Activated T-helper 2 cell treated with anti-CD3 and anti-CD28 coated beads, Interferon-gamma antibody, Interleukin-2, Interleukin-4, amounts not matched to agents 10 μg/mL and 5 μg/mL and 100 μg/mL, durations not matched to agents 14 hours and 24 hours and 36 hours (primary cell): ENCODE measurements at regions of chr7 and their contacts with region 1.

Region 1: GRCh38 chr7:90346336-90347125 is at the start of gene GTPBP10:
- DNase-seq: peak; percentile 93
- H3K4me3 Mint-ChIP-seq: peak within 1 kb of the TSS; percentile 90
- H3K27ac Mint-ChIP-seq: peak within 1 kb of the TSS; percentile 95
- H3K4me1 Mint-ChIP-seq: peaks cover 31% of the 10 kb centered on the region
- H3K27me3 Mint-ChIP-seq: no peaks in the 10 kb centered on the region
- total RNA-seq, gene GTPBP10: 29.3 and 32.0 TPM in 2 replicates

Region 2: DNA sequence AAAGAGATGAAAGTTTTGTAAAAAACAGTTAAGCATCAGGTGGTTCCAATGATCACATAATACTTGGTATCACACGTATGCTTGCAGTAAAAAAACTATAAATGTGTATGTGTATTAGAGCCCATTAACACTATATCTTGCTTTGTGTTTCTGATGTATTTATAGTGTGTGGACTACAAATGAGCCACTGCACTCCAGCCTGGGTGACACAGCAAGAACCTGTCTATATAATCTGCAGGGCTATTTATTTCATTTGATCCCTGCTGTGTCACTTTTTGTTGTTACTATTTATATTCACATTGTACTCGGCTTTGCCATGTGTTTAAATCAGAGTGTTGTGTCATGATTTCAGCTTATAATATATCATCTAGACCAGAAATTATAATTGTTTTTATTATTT is 1063.2 kb before region 1 on chr7:
- intact Hi-C with region 1: no loop called
- DNase-seq: no peak
- H3K4me3 Mint-ChIP-seq: no peak overlapping the region
- H3K27ac Mint-ChIP-seq: no peak overlapping the region
- H3K4me1 Mint-ChIP-seq: no peaks in the 10 kb centered on the region
- H3K27me3 Mint-ChIP-seq: no peaks in the 10 kb centered on the region

Region 3: GRCh38 chr7:90244909-90245851 is 101.4 kb before region 1 on chr7 and contains the start of gene CFAP69:
- intact Hi-C with region 1: loop called (anchors 2 kb)
- DNase-seq: peak; percentile 77
- H3K4me3 Mint-ChIP-seq: peak within 1 kb of the TSS; percentile 85
- H3K27ac Mint-ChIP-seq: no peak within 1 kb of the TSS
- H3K4me1 Mint-ChIP-seq: peaks cover 11% of the 10 kb centered on the region
- H3K27me3 Mint-ChIP-seq: peaks cover 41% of the 10 kb centered on the region
- total RNA-seq, gene CFAP69: 0.34 and 0.51 TPM in 2 replicates

Region 4: DNA sequence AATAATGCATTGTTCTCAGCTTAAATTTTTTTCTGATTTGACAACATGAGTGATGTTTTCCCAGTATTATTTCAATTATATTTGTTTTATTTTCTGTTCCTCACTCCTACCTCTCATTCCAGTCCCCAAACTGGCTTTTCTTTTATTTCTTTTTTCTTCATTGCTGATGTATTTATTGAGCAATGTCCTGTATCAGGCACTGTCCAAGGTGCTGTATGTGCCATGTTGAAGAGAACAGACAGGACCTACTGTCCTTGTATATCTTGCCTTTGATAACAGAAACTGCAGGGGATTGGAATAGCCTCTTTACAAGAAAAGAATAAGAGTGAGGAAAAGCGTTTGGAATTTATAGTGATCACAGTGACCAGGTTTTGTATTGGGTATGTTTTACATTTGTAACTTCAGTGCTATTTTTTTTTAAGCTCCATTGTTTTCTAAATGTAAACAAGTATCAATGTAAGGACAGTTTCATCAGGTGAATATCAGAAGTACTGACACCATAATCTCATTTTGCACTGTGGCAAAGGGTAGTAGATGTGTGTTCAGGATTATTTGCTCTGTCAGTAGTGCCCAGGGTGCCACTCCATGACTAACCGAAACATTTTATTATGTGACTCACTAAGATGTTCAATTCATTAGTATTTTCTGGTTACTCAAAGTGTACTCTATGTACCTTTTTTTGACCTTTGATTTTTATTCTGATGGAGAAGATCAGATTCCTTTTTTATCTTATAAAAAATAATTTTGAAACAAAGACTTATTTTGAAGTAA is 41.1 kb after region 1 on chr7:
- intact Hi-C with region 1: no loop called
- DNase-seq: no peak
- H3K4me3 Mint-ChIP-seq: no peak overlapping the region
- H3K27ac Mint-ChIP-seq: no peak overlapping the region
- H3K4me1 Mint-ChIP-seq: peaks cover 4% of the 10 kb centered on the region
- H3K27me3 Mint-ChIP-seq: no peaks in the 10 kb centered on the region

Region 5: GRCh38 chr7:90403174-90404113 is 56.9 kb after region 1 on chr7 and contains the start of gene CLDN12:
- intact Hi-C with region 1: loop called (anchors 1 kb)
- DNase-seq: peak; percentile 68
- H3K4me3 Mint-ChIP-seq: peak within 1 kb of the TSS; percentile 97
- H3K27ac Mint-ChIP-seq: peak within 1 kb of the TSS; percentile 92
- H3K4me1 Mint-ChIP-seq: peaks cover 21% of the 10 kb centered on the region
- H3K27me3 Mint-ChIP-seq: peaks cover 20% of the 10 kb centered on the region
- total RNA-seq, gene CLDN12: 7.1 and 7.2 TPM in 2 replicates

Region 6: DNA sequence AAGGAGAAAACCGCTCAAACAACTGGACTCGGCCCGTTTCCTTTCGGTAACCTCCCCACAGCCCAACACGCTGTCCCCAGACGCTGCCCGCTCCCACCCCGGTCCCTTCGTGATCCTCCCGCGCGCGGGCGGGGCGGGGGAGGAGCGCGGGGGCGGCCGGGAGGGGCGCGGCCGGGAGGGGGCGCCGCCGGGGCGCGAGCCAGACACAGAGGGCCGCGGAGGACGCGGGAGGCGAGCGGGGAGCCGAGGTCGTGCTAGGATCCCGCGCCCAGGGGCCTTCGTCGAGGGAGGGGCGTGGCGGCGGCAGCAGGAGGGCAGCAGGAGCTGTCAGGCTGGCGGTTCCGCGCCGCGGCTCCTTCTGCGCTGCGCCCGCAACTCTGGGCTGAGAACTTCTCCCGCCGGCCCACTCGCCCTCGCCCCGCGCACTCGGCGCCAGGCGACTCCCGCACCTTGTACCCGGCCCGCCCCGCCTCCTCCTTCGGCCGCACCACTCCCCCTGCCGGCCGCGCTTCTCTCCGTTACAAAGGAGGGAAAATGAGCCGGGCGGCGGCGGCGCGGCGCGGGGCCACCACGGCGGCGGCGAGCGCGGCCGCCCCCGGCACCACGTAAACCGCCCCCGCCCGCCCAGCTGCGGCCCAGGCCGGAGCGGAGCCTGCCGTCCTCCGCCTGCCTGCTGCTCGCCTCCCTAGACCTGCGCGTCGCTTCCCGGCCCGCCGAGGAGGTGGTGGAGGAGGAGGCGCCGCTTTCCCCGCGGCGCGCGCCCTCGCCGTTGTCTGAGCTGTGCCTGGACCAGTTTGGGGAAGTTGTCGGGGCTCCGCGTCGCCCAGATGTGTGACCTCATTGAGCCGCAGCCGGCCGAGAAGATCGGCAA is 249.5 kb after region 1 on chr7 and contains the start of gene CDK14:
- intact Hi-C with region 1: loop called (anchors 5 kb)
- DNase-seq: peak; percentile 30
- H3K4me3 Mint-ChIP-seq: peak within 1 kb of the TSS; percentile 79
- H3K27ac Mint-ChIP-seq: peak within 1 kb of the TSS; percentile 17
- H3K4me1 Mint-ChIP-seq: peaks cover 12% of the 10 kb centered on the region
- H3K27me3 Mint-ChIP-seq: peaks cover 61% of the 10 kb centered on the region
- total RNA-seq, gene CDK14: 2.1 and 2.2 TPM in 2 replicates

Region 7: GRCh38 chr7:90825779-90826178 is 479.2 kb after region 1 on chr7:
- intact Hi-C with region 1: no loop called
- DNase-seq: no peak
- H3K4me3 Mint-ChIP-seq: no peak overlapping the region
- H3K27ac Mint-ChIP-seq: no peak overlapping the region
- H3K4me1 Mint-ChIP-seq: no peaks in the 10 kb centered on the region
- H3K27me3 Mint-ChIP-seq: peaks cover 2% of the 10 kb centered on the region